ENCODE measurements at regions of chr10 and their contacts with region 1.

Region 1: DNA sequence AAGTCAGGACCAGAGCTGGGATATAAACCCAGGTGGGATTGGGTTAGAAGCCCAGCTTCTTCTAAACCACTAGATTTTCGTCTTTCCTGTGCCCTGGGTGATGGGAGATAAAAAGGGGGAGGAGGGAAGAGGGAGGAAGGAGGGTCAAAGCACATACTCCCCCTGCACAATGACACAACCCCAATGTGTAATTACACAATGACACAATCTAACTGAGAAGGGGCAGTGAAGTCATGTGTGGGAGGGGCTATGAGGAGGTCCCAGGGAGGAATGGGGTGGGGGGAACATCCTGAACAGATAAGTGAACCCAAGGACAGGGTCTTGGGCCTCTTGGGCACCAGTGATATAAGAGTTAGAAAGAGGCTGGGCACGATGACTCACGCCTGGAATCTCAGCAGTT is 44.5 kb downstream of the TECTB start:
- DNase-seq: no peak
- H3K4me3 ChIP-seq: no peak overlapping the region
- H3K27ac ChIP-seq: no peak overlapping the region
- H3K4me1 ChIP-seq: no peaks in the 10 kb centered on the region
- H3K27me3 ChIP-seq: no peaks in the 10 kb centered on the region
- CTCF ChIP-seq: no peak
- POLR2A ChIP-seq: no peak

Region 2: DNA sequence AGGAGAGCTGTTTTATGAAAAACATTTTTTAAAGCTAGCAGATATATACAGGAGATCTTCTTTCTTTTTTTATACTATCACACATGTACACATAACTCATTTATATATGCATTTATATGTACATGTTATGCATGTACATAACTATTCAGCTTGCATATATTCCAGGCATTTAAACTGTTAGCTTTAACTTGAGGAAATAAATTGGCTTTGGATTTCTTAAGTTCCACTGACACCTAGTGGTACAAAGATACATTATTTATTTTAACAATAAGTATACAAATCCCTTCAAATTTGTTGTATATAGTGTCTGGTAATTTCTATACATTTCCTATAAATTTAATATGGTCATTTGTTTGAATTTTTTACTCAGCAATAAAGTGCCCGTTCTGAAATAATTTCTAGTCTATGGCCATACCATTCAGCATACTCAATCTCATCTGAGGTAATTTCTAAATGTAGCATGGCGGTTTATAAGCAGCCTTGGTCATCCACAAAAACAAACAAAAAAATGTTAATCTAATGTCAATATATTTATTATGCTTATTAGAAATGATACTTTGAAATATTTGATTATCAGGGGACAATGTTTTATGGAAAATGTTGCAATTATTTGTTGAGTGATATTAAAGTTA is 107.4 kb after region 1 on chr10:
- intact Hi-C with region 1: loop called (anchors 10 kb)
- DNase-seq: no peak
- H3K4me3 ChIP-seq: no peak overlapping the region
- H3K27ac ChIP-seq: no peak overlapping the region
- H3K4me1 ChIP-seq: no peaks in the 10 kb centered on the region
- H3K27me3 ChIP-seq: no peaks in the 10 kb centered on the region
- CTCF ChIP-seq: peak in 6 of 11 experiments; percentile 14 to 44 (median 29)
- POLR2A ChIP-seq: no peak

Region 3: GRCh38 chr10:112446855-112447711 is 119.4 kb after region 1 on chr10 and contains the starts of genes VTI1A and ZDHHC6:
- intact Hi-C with region 1: no loop called
- DNase-seq: peak; percentile 95
- H3K4me3 ChIP-seq: peak within 1 kb of the TSS; percentile 65 to 98 (median 91)
- H3K27ac ChIP-seq: peak within 1 kb of the TSS; percentile 85 to 94 (median 90)
- H3K4me1 ChIP-seq: peaks cover 24 to 89% (median 52%) of the 10 kb centered on the region in 6 donors
- H3K27me3 ChIP-seq: no peaks in the 10 kb centered on the region
- CTCF ChIP-seq: peak in 5 of 11 experiments; percentile 8 to 34 (median 20)
- POLR2A ChIP-seq: peak in 1 of 3 donors; percentile 73
- total RNA-seq, gene VTI1A: 46.5 to 129 (median 73.2) TPM
- total RNA-seq, gene ZDHHC6: 28.0 to 47.1 (median 38.7) TPM

Region 4: DNA sequence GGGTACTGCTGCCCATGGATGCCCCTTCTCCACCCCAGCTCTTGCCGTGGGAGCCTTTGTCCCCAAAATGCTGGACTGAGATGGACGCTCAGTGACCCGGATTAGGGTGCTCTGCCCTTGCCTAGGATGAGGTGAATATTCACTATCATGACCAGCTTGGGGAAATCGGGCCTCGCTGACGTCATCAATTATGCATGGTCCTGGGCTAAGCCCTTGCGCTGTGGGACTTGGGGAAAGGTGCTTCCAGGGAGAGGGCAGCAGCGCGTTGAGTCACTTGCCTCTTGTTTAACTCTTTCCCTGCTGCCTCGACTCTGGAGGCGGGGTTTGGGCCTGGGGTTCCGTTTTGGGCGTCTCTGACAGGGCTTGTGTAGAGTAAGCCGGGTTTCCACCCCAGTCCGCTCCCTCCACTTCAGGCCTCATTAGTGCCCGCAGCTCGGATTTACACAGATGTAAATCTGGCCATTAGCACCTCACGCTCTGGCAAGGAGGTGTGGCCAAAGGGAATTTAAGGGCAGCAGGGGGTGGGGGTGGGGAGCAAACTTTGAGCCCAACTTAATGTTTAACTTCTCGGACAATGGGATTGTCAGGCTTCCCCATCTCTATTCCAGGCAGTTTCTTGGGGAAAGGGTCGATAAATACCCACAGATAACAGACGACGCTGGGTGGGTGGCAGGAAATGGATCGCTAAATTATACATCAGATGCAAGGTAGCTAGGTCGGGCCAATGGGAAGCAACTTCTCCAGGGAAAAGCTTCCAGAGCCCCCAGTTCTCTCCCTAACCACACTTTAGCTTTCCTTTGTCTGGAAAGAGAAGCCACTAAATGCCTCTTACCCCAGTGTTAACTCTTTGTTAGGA is 571.1 kb after region 1 on chr10:
- intact Hi-C with region 1: no loop called
- DNase-seq: no peak
- H3K4me3 ChIP-seq: no peak overlapping the region
- H3K27ac ChIP-seq: no peak overlapping the region
- H3K4me1 ChIP-seq: no peaks in the 10 kb centered on the region
- H3K27me3 ChIP-seq: no peaks in the 10 kb centered on the region
- CTCF ChIP-seq: no peak
- POLR2A ChIP-seq: no peak

Measured in spleen (tissue), 13 donors.